ENCODE measurements at regions of chr18 and their contacts with region 1.

Region 1: GRCh38 chr18:11908182-11909060 is at the start of gene MPPE1:
- DNase-seq: peak; percentile 93
- H3K4me3 ChIP-seq: peak within 1 kb of the TSS; percentile 79 to 84 (median 80)
- H3K27ac ChIP-seq: peak within 1 kb of the TSS; percentile 97 to 100 (median 98)
- H3K4me1 ChIP-seq: peaks cover 0 to 26% (median 10%) of the 10 kb centered on the region in 4 donors
- H3K27me3 ChIP-seq: no peaks in the 10 kb centered on the region
- CTCF ChIP-seq: no peak
- EP300 ChIP-seq: no peak
- POLR2A ChIP-seq: peak; percentile 98
- total RNA-seq, gene MPPE1: 24.7 to 83.4 (median 55.8) TPM

Region 2: GRCh38 chr18:11857177-11857887 is 51.1 kb before region 1 on chr18:
- in situ Hi-C with region 1: no loop called
- intact Hi-C with region 1: loop called (anchors 5 kb)
- DNase-seq: peak; percentile 83
- H3K4me3 ChIP-seq: peak overlapping the region in 1 of 4 donors; percentile 6
- H3K27ac ChIP-seq: peak overlapping the region; percentile 80 to 98 (median 84)
- H3K4me1 ChIP-seq: peaks cover 19 to 68% (median 43%) of the 10 kb centered on the region in 4 donors
- H3K27me3 ChIP-seq: no peaks in the 10 kb centered on the region
- CTCF ChIP-seq: no peak
- EP300 ChIP-seq: peak; percentile 97
- POLR2A ChIP-seq: peak; percentile 29

Region 3: DNA sequence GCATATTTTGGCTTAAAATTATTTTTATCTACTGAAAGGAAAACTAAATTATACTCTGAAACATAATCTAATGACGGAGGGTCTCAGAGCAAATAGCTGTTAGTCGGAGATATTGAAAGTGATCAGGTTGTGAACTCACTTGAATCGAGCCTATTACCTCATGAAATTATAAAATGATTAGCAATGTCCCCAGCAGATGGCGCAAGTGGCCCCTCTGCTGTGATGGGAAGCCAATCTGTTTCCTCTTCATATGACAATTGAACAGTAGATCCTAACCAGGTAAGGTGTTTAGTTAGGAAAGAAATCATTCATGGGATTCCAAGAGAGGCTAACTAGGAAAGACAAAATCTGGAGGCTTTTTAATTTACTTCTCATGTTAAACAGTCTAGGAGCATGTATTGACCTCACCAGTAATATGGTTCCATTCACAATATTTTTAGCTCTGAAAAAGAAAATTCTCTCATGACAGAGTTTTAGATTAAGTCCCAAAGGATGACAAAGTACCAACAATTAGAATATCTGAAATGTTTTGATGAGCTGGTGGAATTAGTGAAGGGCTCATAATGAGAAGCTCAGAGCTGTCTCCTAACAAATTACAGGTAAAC is 29.6 kb after region 1 on chr18:
- in situ Hi-C with region 1: no loop called
- intact Hi-C with region 1: no loop called
- DNase-seq: peak; percentile 85
- H3K4me3 ChIP-seq: no peak overlapping the region
- H3K27ac ChIP-seq: no peak overlapping the region
- H3K4me1 ChIP-seq: no peaks in the 10 kb centered on the region
- H3K27me3 ChIP-seq: no peaks in the 10 kb centered on the region
- CTCF ChIP-seq: peak; percentile 81 to 87 (median 86)
- EP300 ChIP-seq: no peak
- POLR2A ChIP-seq: no peak

Region 4: GRCh38 chr18:11980555-11981382 is 72.3 kb after region 1 on chr18:
- in situ Hi-C with region 1: no loop called
- intact Hi-C with region 1: loop called (anchors 2 kb)
- DNase-seq: peak; percentile 99
- H3K4me3 ChIP-seq: peak overlapping the region; percentile 66 to 94 (median 88)
- H3K27ac ChIP-seq: peak overlapping the region; percentile 97 to 99 (median 99)
- H3K4me1 ChIP-seq: peaks cover 10 to 36% (median 25%) of the 10 kb centered on the region in 4 donors
- H3K27me3 ChIP-seq: no peaks in the 10 kb centered on the region
- CTCF ChIP-seq: peak in 1 of 5 experiments; percentile 28
- EP300 ChIP-seq: no peak
- POLR2A ChIP-seq: peak; percentile 90